PC-9 (cell line): ENCODE measurements at regions of chr5 and their contacts with region 1.

Region 1: DNA sequence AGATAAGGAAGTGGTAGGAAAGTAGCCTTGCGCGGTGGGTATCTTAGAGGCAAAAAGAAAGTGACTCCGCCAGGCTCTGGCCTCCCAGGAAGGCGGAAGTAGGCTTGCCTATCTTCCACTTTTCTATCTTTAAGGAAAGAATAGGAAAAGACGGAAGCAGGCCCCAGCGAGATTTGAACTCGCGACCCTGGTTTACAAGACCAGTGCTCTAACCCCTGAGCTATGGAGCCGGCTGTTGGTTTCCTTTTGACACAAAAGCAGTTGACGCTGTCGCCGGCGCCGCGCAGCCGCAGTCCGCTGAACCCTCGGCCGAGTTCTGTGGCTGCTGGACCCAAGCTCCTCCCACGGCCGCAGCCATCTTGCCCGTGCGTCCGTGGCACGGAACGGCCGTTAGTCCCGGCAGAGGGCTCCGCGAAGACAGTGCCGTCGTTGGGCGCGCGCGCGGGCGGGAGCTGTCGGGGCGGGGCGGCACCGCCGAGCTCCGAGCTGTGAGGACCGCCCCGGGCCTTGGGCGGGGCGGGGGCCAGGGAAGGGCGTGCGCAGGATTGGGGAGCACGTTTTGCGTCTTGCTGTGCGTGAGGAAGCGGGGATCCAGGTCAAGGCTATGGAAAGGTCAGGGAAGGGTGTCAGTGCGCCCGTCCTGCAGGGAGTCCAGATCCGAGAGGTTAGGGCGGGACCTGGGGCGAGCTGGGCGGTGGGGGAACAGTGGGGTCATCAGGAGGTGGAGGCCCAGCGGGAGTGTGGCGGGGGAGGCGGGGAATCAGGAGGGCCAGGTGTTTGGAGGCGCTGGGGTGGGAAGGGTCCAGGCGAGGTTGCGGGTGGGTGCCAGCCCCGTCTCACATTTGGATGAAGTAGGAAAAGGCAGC is 13.2 kb downstream of the TRIM7 start:
- DNase-seq: peak; percentile 87 to 97
- H3K4me3 ChIP-seq: peak overlapping the region; percentile 98
- H3K27ac ChIP-seq: peak overlapping the region; percentile 40; the same call in 1 of the 2 replicates
- H3K4me1 ChIP-seq: peaks cover 13% of the 10 kb centered on the region; the same call in 1 of the 2 replicates
- H3K27me3 ChIP-seq: no peaks in the 10 kb centered on the region
- CTCF ChIP-seq: no peak

Region 2: GRCh38 chr5:180540050-180540694 is 651.6 kb before region 1 on chr5:
- CTCF ChIA-PET with region 1: no interaction called
- POLR2A ChIA-PET with region 1: no interaction called
- intact Hi-C with region 1: no loop called
- DNase-seq: no peak
- H3K4me3 ChIP-seq: no peak overlapping the region
- H3K27ac ChIP-seq: no peak overlapping the region
- H3K4me1 ChIP-seq: no peaks in the 10 kb centered on the region
- H3K27me3 ChIP-seq: no peaks in the 10 kb centered on the region
- CTCF ChIP-seq: no peak

Region 3: GRCh38 chr5:180810210-180810958 is 381.4 kb before region 1 on chr5:
- CTCF ChIA-PET with region 1: no interaction called
- POLR2A ChIA-PET with region 1: no interaction called
- intact Hi-C with region 1: loop called (anchors 2 kb)
- DNase-seq: peak; percentile 80 to 96
- H3K4me3 ChIP-seq: peak overlapping the region; percentile 95
- H3K27ac ChIP-seq: peak overlapping the region; percentile 91
- H3K4me1 ChIP-seq: peaks cover 55% of the 10 kb centered on the region
- H3K27me3 ChIP-seq: no peaks in the 10 kb centered on the region
- CTCF ChIP-seq: no peak

Region 4: DNA sequence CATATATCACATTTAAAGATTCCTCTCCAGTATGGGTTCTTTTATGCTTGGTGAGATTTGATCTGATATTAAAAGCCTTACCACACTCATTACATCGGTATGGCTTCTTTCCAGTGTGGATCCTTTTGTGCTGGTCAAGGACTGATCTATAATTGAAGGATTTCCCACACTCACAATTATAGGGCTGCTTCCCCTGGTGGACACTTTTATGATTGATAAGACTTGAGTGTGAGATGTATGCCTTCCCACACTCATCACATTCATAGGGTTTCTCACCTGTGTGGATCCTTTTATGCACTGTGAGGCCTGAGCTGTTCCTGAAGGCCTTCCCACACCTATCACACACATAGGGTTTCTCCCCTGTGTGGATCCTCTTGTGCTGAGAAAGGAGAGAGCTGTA is 342.9 kb before region 1 on chr5:
- CTCF ChIA-PET with region 1: no interaction called
- POLR2A ChIA-PET with region 1: no interaction called
- intact Hi-C with region 1: no loop called
- DNase-seq: no peak
- H3K4me3 ChIP-seq: no peak overlapping the region
- H3K27ac ChIP-seq: no peak overlapping the region
- H3K4me1 ChIP-seq: no peaks in the 10 kb centered on the region
- H3K27me3 ChIP-seq: no peaks in the 10 kb centered on the region
- CTCF ChIP-seq: no peak

Region 5: DNA sequence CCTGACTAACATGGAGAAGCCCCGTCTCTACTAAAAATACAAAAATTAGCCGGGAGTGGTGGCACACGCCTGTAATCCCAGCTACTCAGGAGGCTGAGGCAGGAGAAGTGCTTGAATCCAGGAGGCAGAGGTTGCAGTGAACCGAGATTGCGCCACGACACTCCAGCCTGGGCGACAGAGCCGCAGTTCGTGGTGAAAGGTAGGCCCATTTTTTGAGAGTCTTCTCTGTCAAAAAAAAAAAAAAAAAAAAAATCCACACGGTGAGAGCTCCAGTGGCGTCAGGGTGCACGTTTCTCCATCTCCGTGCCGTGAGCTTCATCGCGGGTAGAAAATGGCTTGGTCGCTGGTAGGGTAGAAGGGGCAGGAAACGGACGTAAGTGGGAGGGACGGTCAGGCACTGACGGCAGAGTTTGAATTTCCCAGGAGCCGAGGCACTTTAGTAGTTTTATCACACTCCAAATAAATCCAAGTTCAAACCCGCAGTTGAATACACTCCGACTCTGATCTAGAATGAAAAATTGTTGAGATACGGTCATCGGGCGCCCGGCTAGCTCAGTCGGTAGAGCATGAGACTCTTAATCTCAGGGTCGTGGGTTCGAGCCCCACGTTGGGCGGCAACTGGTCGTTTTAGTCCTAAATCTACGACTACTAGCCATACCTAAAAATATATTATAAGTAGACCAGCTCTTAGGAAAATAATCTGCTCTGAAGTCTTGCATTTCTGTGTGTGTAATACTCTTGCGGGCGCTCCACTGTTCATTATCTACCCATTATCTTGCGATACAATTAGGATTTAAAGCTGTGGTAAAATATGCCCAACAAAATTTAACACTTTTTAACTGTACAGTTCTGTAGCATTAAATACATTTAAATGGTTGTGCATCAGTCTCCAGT is 15.7 kb after region 1 on chr5:
- CTCF ChIA-PET with region 1: interaction called, 4 read pairs
- POLR2A ChIA-PET with region 1: interaction called, 4 read pairs
- intact Hi-C with region 1: loop called (anchors 1 kb)
- DNase-seq: peak; percentile 82 to 86
- H3K4me3 ChIP-seq: peak overlapping the region; percentile 69
- H3K27ac ChIP-seq: peak overlapping the region; percentile 56
- H3K4me1 ChIP-seq: peaks cover 12% of the 10 kb centered on the region
- H3K27me3 ChIP-seq: no peaks in the 10 kb centered on the region
- CTCF ChIP-seq: no peak

Region 6: DNA sequence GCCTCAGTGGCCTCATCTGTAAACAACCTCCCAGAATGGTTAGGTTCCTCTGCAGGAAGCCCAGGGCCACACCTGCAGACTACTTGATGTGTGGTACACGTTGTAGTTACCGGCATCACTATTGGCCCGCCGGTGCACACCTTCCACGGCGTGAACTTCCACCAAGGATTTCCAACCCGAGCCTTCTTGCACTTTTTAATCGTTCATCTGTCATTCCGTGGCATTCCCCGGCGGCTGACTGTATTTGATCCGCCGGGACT is 26.0 kb after region 1 on chr5:
- CTCF ChIA-PET with region 1: no interaction called
- POLR2A ChIA-PET with region 1: no interaction called
- intact Hi-C with region 1: loop called (anchors 1 kb)
- DNase-seq: peak in 1 of 2 experiments; percentile 54
- H3K4me3 ChIP-seq: peak overlapping the region; percentile 70
- H3K27ac ChIP-seq: peak overlapping the region; percentile 25
- H3K4me1 ChIP-seq: peaks cover 7% of the 10 kb centered on the region; the same call in 1 of the 2 replicates
- H3K27me3 ChIP-seq: no peaks in the 10 kb centered on the region
- CTCF ChIP-seq: no peak; the same call in 1 of the 2 replicates

Region 7: DNA sequence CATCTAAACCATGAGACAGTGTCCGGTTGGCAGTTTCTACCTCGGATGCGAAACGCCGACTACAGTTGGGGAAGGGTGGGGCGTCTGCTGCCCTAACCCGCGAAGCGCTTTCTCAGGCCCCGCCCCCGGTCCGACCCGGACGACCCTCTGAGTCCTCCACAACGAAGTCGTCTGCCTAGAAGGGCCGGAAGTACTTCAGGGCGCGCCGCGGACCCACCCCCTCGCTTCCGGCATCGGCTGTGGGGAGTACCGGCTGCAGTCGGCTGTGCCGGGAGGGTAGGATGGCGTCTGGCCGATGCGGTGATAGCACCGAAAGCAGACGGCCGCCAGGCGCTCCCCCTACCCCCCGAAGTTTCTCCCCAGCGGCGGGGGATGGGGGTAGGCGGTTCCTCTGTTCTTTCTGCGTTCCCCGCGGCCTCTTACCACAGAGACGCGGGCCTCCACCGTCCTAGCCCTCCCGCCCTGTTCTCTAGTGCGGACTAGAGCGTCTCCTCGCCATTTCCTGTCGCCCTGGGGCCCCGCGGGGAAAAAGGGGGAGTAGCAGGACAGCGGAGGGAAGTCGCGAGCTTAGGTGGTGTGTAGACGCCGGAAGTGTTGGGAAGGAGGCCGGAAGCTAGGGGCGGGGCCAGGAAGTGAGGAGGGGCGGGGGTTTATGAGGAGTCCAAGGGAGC is 31.4 kb after region 1 on chr5 and contains the start of gene TRIM41:
- CTCF ChIA-PET with region 1: interaction called, 3 read pairs
- POLR2A ChIA-PET with region 1: no interaction called
- intact Hi-C with region 1: loop called (anchors 1 kb)
- DNase-seq: peak; percentile 93 to 99
- H3K4me3 ChIP-seq: peak within 1 kb of the TSS; percentile 68
- H3K27ac ChIP-seq: peak within 1 kb of the TSS; percentile 89
- H3K4me1 ChIP-seq: peaks cover 15% of the 10 kb centered on the region; the same call in 1 of the 2 replicates
- H3K27me3 ChIP-seq: no peaks in the 10 kb centered on the region
- CTCF ChIP-seq: no peak
- total RNA-seq, gene TRIM41: 57.6 and 66.0 TPM in 2 replicates

Region 8: DNA sequence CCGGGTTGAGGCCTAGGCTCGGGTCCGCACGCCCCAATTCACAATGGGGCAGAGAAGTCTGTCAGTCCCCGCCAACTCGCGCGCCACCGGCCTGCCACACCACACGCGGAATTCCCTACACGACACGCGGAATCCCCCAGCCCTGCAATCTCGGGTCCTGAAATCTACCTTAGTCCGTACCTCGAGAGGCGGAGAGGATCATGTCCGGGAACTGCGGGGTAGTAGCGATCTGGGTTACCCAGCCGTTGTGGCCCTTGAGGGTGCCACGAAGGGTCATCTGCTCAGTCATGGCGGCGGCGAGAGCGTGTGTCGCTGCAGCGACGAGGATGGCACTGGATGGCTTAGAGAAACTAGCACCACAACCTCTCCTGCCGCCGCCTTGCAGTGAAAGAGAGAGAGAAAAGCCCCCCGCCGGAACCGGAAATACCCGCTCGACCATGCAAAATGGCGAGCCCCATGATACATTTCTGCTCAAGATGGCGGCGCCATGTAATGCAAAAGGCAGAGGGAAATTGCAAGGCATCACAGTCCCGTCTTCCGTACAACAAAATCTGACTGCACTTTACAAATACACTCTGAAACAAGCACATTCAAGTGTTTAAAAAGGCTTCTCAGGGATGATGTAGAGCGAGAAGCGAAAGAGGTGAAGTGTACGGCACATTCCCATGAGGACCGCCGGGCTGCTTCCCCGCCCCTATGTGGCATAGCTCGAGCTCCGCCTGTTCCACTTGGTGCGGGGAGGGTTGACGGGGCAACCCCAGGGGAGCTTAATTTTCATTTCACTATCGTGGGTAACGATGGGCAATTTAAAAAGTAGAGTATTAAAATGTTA is 52.0 kb after region 1 on chr5 and contains the start of gene RACK1:
- CTCF ChIA-PET with region 1: no interaction called
- POLR2A ChIA-PET with region 1: interaction called, 5 read pairs
- intact Hi-C with region 1: loop called (anchors 1 kb)
- DNase-seq: peak; percentile 73 to 89
- H3K4me3 ChIP-seq: peak within 1 kb of the TSS; percentile 95
- H3K27ac ChIP-seq: peak within 1 kb of the TSS; percentile 97
- H3K4me1 ChIP-seq: peaks cover 29% of the 10 kb centered on the region
- H3K27me3 ChIP-seq: no peaks in the 10 kb centered on the region
- CTCF ChIP-seq: no peak
- total RNA-seq, gene RACK1: 2,373 and 2,766 TPM in 2 replicates

Region 9: DNA sequence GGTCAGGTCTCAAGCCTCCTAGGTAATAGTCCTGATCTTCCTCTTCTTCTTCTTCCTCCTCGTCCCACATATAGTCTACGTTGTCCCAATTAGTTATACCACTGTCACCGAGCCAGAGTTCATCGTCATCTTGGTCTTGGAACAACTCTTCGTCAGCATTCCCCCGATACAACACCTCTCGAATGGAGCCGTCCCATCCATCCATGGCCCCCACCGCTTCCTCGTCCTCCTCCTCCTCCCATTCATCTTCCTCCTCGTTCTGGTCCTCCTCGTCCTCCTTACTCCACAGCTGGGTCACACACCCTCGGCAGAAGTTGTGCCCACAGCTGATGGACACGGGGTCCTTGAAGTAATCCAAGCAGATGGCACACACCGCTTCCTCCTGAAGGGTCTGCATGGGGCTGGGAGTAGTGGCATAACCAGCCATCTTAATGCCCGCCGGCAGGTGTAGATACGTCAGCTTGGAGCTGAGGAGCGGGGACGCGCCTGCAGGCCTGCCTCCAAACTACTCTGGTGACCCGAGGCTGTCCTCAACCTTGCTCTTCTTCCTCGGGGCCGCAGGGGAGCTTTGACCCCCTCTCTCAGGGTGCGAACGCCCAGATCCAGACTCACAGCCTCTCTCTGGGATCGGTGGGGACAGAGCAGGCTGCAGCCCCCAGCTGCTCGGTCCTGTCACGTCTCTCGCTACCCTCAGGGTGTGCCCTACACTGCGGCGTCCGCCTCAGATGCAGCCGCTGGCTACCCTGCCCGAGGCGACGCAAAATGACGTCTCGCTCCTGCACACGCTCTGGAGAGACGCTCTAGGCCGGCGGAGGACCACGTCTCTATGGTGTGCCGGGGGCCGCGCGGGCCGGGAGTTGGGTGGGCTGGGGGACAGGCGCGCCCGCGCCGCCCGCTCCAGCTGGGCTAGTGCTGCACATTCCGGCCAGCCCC is 68.9 kb after region 1 on chr5 and contains the start of gene TRIM52:
- CTCF ChIA-PET with region 1: interaction called, 11 read pairs
- POLR2A ChIA-PET with region 1: no interaction called
- intact Hi-C with region 1: loop called (anchors 1 kb)
- DNase-seq: peak; percentile 83 to 91
- H3K4me3 ChIP-seq: peak within 1 kb of the TSS; percentile 96
- H3K27ac ChIP-seq: peak within 1 kb of the TSS; percentile 66
- H3K4me1 ChIP-seq: peaks cover 36% of the 10 kb centered on the region
- H3K27me3 ChIP-seq: no peaks in the 10 kb centered on the region
- CTCF ChIP-seq: no peak
- total RNA-seq, gene TRIM52: 15.2 and 15.7 TPM in 2 replicates